G401 (cell line): ENCODE measurements at regions of chr17 and their contacts with region 1.

Region 1: GRCh38 chr17:80724775-80725266 is 180.2 kb downstream of the RPTOR start:
- DNase-seq: no peak

Region 2: DNA sequence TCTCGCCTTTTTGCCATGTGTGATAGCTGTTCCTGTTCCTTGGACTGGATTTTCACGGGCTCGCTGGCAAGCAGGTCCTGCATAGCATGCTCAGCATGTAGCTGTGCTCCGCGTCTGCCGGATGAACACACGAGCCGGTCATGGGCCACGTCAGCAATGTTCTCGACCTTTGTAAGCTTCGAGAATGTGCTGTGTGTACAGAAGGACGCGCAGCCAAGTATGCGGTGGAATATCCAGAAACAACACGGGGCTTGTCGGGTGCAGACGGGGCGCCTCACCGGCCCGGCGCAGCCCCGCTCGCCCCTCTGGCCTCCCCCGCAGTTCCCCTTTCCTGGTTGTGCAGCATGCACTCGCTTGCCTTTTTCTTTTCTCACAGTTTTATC is 138.0 kb before region 1 on chr17:
- in situ Hi-C with region 1: no loop called
- DNase-seq: peak; percentile 63

Region 3: GRCh38 chr17:80637048-80637781 is 87.6 kb before region 1 on chr17:
- in situ Hi-C with region 1: loop called (anchors 5 kb)
- DNase-seq: peak; percentile 19

Region 4: DNA sequence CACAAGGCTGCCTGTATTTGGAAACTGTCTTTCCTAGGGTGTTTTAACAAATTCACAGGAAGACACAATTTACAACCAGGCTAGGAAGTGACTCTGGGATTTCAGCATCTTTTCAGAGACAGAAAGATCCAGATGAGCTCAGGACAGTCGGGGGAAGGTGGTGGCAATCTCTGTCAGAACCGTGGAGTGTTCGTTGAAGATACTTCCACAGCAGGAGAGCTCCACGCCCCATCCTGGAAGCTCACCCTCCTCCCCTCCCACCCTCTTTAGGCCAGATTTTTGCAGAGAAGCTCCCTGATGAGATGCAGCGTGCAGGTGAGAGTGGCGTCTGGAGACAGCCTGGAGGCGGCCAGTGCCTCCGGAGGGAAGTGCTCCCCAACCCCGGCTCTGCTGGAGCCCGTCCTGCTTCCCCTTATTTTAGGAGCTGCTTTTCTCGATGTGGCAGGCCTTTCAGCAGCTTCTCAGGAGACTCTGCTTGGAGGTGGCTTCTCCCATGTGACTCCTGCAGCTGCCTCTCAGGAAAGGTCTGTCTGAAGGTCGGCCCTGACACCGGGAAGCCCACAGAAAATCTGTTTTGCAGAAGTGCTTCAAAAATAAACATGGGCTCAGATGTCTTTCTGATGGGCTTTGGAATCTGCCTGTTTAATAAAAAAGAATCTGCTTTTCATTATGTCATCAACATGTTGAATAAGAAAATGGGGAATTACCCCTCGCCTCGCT is 80.4 kb after region 1 on chr17:
- in situ Hi-C with region 1: no loop called
- DNase-seq: no peak

Region 5: DNA sequence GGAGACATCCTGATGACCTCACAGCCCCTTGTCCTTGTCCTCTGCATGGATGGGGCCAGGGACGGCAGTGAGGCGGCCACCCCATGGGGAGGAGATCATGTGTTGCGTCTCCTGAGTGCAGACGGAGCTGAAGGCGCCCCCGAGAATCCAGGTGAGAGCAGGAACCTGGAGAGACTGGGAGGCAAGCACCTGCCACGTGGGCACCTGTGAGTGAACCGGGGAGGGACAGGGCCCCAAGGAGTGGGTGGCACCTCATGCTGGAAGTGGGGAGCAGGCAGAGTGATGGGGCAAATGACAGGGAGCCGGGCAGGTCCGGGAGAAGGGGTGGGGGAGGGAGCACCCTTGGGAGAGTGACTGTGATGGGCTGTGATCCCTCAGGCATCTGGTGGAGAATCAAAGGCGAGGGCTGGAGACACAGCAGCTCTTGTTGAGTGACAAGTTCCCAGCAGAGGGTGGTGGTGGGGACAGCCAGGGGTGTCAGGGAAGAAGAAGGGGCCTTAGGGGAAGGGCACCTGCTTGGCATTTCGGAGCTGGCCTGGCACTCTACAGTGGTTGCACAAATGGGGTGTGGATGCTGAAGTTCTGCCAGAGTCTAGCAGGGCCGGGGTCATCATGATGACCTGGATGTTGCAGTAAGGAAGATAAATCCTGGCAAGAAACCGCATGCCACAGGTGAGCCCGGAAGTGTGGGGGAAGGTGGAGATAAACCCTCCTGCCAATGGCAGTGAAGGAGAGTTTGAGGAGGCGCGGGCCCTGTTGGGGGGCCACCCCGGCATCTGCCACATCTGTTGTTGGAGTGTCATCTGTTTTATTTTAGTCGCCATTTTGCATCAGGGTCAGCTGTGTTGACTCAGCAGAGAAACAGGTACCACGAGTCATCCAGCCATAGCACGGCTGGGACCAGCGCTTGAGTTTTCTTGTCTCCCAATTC is 92.8 kb after region 1 on chr17:
- in situ Hi-C with region 1: no loop called
- DNase-seq: no peak